Mammary epithelial cell (primary cell): ENCODE measurements at regions of chr22 and their contacts with region 1.

Region 1: GRCh38 chr22:37212167-37212906 is at the start of gene SSTR3:
- DNase-seq: no peak
- H3K4me3 ChIP-seq: no peak within 1 kb of the TSS
- H3K27ac ChIP-seq: no peak within 1 kb of the TSS
- H3K4me1 ChIP-seq: peaks cover 3% of the 10 kb centered on the region
- H3K27me3 ChIP-seq: no peaks in the 10 kb centered on the region
- CTCF ChIP-seq: no peak
- total RNA-seq, gene SSTR3: not detected

Region 2: GRCh38 chr22:37139762-37140161 is 72.6 kb before region 1 on chr22:
- CTCF ChIA-PET with region 1: no interaction called
- dilution Hi-C with region 1: loop called (anchors 5 kb)
- in situ Hi-C with region 1: no loop called
- intact Hi-C with region 1: no loop called
- DNase-seq: no peak
- H3K4me3 ChIP-seq: no peak overlapping the region
- H3K27ac ChIP-seq: no peak overlapping the region
- H3K4me1 ChIP-seq: peaks cover 8% of the 10 kb centered on the region
- H3K27me3 ChIP-seq: no peaks in the 10 kb centered on the region
- CTCF ChIP-seq: no peak

Region 3: DNA sequence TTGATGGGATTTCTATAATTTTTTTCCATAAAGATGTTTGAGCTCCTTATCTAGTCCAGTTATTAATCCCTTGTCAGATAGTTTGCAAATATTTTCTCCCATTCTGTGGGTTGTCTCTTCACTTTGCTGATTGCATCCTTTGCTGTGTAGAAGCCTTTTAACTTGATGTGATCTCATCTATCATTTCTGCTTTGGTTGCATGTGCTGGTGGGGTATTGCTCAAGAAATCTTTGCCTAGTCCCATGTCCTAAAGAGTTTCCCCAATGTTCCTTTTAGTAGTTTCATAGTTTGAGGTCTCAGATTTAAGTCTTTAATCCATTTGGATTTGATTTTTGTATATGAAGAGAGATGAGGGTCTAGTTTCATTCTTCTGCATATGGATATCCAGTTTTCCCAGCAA is 60.9 kb before region 1 on chr22:
- CTCF ChIA-PET with region 1: no interaction called
- dilution Hi-C with region 1: no loop called
- in situ Hi-C with region 1: no loop called
- intact Hi-C with region 1: no loop called
- DNase-seq: no peak
- H3K4me3 ChIP-seq: no peak overlapping the region
- H3K27ac ChIP-seq: no peak overlapping the region
- H3K4me1 ChIP-seq: peaks cover 2% of the 10 kb centered on the region
- H3K27me3 ChIP-seq: no peaks in the 10 kb centered on the region
- CTCF ChIP-seq: no peak

Region 4: DNA sequence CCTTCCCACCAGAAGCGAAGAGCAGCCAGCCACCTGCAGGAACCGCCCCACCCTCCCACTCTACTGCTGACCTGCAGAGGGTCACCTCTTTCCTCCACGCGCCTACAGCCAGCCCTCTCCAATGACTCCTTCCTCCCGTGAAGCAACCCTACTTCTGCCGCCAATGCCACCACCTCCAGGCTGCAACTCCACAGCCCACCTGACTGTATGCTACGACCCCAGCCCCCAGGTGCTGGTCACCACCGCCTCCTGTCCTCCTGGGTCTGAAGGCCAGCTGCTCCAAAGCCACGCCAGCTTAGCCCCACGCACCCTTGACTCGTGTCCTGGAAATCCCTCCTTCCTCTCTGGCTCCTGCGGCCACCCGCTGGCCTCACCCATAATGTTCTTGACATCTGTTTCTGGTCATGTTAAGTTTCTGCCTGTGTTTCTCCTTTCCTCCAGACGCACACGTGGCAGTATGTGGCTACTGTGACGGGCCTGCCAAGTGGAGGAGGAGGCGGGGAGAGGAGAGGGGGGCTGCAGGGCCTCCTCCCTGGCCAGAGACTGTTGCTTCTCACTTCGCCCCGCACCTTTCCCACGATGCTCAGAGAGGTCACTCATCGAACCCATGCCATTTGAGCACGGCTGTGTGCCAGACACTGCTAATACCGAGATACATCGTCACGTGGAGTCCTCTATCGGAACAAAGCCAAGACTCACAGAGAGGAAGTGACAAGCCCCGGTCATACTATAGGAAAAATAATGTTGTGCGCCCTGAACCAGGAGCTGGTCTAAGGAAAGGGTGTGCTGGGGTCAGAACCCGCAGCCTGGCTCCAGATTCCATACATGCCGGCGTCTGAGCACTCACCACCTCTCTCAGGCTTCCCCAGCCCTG is 35.9 kb before region 1 on chr22:
- CTCF ChIA-PET with region 1: no interaction called
- dilution Hi-C with region 1: loop called (anchors 5 kb)
- in situ Hi-C with region 1: no loop called
- intact Hi-C with region 1: no loop called
- DNase-seq: no peak
- H3K4me3 ChIP-seq: no peak overlapping the region
- H3K27ac ChIP-seq: no peak overlapping the region
- H3K4me1 ChIP-seq: peaks cover 7% of the 10 kb centered on the region
- H3K27me3 ChIP-seq: peaks cover 8% of the 10 kb centered on the region
- CTCF ChIP-seq: no peak